Activated CD4-positive, alpha-beta memory T cell treated with anti-CD3 and anti-CD28 coated beads for 36 hours (primary cell): ENCODE measurements at regions of chr4 and their contacts with region 1.

Region 1: GRCh38 chr4:98995183-98996055 is at the start of gene METAP1:
- DNase-seq: peak; percentile 97
- H3K4me3 Mint-ChIP-seq: peak within 1 kb of the TSS; percentile 88
- H3K27ac Mint-ChIP-seq: peak within 1 kb of the TSS; percentile 96
- H3K4me1 Mint-ChIP-seq: peaks cover 37% of the 10 kb centered on the region
- H3K27me3 Mint-ChIP-seq: no peaks in the 10 kb centered on the region
- total RNA-seq, gene METAP1: 60.7 to 61.1 TPM

Region 2: DNA sequence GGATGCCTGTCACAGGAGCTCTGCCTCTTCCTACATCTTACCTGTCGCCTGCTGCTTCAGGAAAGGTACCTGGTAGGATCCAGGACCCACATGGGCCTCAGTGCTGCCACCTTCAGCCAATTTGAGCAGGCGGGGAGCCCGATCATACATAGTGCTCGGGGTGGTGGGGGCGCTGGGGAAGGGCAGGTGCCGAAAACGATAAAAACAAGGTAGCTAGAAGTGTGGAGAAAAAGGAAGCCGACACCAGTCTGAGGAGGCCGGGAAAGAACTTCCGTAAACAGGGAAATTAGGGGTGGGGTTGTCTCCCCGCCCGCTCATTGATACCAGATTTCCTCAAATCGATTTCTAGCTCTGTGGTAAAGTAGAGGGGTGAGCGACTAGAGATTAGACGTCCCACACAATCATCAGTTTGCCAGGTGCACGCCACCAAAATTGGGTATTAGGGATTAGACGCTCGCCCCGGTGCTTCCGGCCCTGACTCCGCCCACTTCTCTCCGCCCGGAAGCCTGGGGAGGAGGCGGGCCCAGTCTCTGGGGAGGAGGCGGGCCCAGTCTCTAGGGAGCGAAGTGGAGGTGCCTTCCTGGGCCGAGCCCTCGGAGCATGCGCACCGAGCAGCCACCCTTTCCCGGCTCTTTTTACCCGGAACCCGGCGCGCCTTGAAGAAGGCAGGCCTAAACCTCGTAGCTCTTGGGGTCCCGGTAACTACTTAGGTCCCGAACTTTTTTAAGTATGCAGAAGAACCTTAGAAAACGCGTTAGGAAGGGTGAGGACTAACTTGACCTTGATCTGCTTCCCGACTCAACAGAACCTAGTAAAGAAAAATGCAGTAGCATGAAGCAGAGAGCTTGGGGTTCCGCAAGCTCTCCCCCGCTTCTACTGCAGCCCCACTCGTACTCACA is 852.2 kb before region 1 on chr4 and contains the start of gene STPG2:
- CTCF ChIA-PET with region 1: interaction called, 4 read pairs
- POLR2A ChIA-PET with region 1: interaction called, 3 read pairs
- intact Hi-C with region 1: loop called (anchors 2 kb)
- DNase-seq: peak; percentile 95
- H3K4me3 Mint-ChIP-seq: peak within 1 kb of the TSS; percentile 95
- H3K27ac Mint-ChIP-seq: peak within 1 kb of the TSS; percentile 98
- H3K4me1 Mint-ChIP-seq: peaks cover 20% of the 10 kb centered on the region
- H3K27me3 Mint-ChIP-seq: no peaks in the 10 kb centered on the region
- total RNA-seq, gene STPG2: not detected

Region 3: DNA sequence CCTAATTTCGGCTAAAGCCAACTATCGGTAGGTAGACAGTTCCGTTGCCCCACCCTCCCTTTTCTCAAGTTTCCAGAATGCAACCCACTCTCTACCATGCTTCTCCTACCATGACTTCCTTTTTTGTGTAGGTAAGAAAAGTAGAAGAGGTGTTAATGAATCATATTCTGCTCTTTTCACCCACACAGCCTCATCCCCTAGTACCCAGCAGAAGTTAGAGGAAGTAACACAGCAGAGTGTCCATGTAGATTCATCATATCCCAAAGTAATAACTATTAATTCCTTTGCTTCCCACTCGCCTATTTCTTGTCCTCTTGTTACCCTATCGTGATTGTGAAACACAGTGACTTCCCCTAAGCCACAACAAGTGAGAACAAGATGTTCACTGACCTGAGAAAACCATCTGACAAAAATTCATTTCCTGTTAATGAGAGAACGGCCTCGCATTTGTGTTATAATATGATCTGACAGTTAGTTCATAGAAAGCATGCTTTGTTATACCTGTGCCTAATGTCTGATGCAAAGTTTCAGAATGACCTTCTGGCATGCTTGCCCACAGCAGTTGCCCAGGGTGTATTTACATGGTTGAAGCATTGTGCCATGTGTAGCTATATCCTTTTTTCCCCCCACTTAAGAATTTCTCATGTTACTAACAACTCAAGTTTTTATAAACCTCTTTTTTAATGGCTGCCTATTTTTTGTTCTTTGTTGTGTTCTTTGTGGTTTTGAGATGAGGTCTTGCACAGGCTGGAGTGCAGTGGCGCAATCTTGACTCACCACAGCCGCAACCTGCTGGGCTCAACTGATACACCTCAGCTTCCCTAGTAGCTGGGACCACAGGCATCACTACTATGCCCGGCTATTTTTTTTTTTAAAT is 548.7 kb before region 1 on chr4:
- CTCF ChIA-PET with region 1: no interaction called
- POLR2A ChIA-PET with region 1: no interaction called
- intact Hi-C with region 1: loop called (anchors 5 kb)
- DNase-seq: peak; percentile 81
- H3K4me3 Mint-ChIP-seq: peak overlapping the region; percentile 48
- H3K27ac Mint-ChIP-seq: peak overlapping the region; percentile 87
- H3K4me1 Mint-ChIP-seq: peaks cover 35% of the 10 kb centered on the region
- H3K27me3 Mint-ChIP-seq: no peaks in the 10 kb centered on the region

Region 4: DNA sequence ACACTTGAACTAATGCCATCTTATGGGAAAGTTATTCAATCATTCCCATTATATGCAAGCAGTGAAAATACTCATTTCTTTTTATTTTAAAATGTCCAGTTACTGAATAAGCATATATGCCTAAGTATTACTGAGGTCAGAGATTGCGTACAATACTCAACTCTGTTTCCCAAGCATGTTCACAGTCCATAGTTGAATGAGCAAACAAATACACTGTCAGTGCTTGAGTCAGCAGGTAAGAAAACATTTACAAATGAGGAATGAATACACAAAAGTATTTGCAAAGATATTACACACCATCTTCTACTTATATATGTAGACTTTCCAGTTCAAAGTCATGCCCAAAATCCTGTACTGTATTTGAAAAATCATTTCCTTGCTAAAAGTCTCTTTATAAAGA is 411.2 kb before region 1 on chr4:
- CTCF ChIA-PET with region 1: no interaction called
- POLR2A ChIA-PET with region 1: no interaction called
- intact Hi-C with region 1: no loop called
- DNase-seq: no peak
- H3K4me3 Mint-ChIP-seq: no peak overlapping the region
- H3K27ac Mint-ChIP-seq: no peak overlapping the region
- H3K4me1 Mint-ChIP-seq: peaks cover 44% of the 10 kb centered on the region
- H3K27me3 Mint-ChIP-seq: no peaks in the 10 kb centered on the region

Region 5: DNA sequence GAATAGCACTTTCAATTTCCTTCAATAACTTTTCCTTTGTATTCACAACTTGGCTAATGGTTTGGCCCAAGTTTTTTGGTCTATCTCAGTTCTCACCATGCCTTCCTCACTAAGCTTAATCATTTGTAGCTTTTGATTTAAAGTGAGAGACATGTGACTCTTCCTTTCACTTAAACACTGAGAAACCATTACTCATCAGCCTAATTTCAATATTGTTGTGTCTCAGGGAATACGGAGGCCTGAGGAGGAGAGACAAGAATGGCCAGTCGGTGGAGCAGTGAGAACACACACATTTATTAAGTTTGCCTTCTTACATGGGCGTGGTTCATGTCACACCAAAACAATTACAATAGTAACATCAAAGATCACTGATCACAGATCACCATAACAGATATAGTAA is 393.7 kb before region 1 on chr4:
- CTCF ChIA-PET with region 1: interaction called, 6 read pairs
- POLR2A ChIA-PET with region 1: no interaction called
- intact Hi-C with region 1: loop called (anchors 1 kb)
- DNase-seq: peak; percentile 54
- H3K4me3 Mint-ChIP-seq: peak overlapping the region; percentile 54
- H3K27ac Mint-ChIP-seq: peak overlapping the region; percentile 82
- H3K4me1 Mint-ChIP-seq: peaks cover 55% of the 10 kb centered on the region
- H3K27me3 Mint-ChIP-seq: no peaks in the 10 kb centered on the region

Region 6: DNA sequence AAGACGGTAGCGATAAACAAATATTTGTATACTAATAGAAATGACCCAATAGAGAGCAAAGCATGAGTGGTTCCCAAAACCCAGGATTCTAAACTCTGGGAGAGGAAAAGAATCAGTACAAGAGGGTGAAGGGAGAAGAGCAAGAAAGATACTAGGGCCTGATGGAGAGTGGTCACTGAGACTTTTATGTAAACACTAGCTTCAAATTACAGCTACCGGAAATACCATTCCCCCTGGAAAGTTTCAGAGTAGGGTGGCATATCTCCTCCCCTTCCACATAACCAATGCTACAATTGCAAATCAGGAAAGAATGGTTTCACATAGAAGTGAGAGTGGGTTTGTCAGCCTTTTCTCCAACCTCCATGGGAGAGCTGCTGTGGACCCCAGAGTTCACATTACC is 143.6 kb before region 1 on chr4:
- CTCF ChIA-PET with region 1: no interaction called
- POLR2A ChIA-PET with region 1: no interaction called
- intact Hi-C with region 1: no loop called
- DNase-seq: no peak
- H3K4me3 Mint-ChIP-seq: no peak overlapping the region
- H3K27ac Mint-ChIP-seq: no peak overlapping the region
- H3K4me1 Mint-ChIP-seq: no peaks in the 10 kb centered on the region
- H3K27me3 Mint-ChIP-seq: peaks cover 5% of the 10 kb centered on the region

Region 7: DNA sequence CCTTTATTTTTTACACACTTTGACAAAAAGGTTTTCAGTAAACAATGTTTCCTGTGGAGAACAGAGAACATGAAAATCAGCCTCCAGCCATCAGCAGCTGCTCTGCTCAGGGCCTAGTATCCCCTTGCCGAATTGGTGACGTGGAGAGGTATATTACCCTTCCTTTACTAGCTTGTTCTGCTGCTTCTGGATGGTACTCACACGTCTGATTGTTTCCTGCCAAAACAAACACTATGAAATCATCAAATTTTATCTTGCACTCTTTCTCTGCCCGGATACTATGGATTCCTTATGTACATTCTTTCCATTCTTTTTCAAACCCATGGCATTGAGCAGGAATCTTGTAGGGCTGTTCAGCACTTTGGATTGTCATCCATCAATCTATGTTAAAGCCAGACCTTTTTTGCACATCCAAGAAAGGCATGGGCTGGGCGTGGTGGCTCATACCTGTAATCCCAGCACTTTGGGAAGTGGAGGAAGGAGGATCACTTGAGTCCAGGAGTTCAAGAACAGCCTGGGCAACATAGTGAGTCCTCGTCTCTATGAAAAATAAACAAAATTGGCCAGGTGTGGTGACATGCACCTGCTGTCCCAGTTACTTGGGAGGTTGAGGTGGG is 18.6 kb before region 1 on chr4:
- CTCF ChIA-PET with region 1: interaction called, 10 read pairs
- POLR2A ChIA-PET with region 1: no interaction called
- intact Hi-C with region 1: no loop called
- DNase-seq: no peak
- H3K4me3 Mint-ChIP-seq: no peak overlapping the region
- H3K27ac Mint-ChIP-seq: no peak overlapping the region
- H3K4me1 Mint-ChIP-seq: no peaks in the 10 kb centered on the region
- H3K27me3 Mint-ChIP-seq: peaks cover 6% of the 10 kb centered on the region

Region 8: GRCh38 chr4:99088481-99089365 is 93.3 kb after region 1 on chr4 and contains the start of gene ADH5:
- CTCF ChIA-PET with region 1: interaction called, 8 read pairs
- POLR2A ChIA-PET with region 1: interaction called, 25 read pairs
- intact Hi-C with region 1: loop called (anchors 1 kb)
- DNase-seq: peak; percentile 95
- H3K4me3 Mint-ChIP-seq: peak within 1 kb of the TSS; percentile 96
- H3K27ac Mint-ChIP-seq: peak within 1 kb of the TSS; percentile 93
- H3K4me1 Mint-ChIP-seq: peaks cover 37% of the 10 kb centered on the region
- H3K27me3 Mint-ChIP-seq: no peaks in the 10 kb centered on the region
- total RNA-seq, gene ADH5: 112 to 119 TPM

Region 9: DNA sequence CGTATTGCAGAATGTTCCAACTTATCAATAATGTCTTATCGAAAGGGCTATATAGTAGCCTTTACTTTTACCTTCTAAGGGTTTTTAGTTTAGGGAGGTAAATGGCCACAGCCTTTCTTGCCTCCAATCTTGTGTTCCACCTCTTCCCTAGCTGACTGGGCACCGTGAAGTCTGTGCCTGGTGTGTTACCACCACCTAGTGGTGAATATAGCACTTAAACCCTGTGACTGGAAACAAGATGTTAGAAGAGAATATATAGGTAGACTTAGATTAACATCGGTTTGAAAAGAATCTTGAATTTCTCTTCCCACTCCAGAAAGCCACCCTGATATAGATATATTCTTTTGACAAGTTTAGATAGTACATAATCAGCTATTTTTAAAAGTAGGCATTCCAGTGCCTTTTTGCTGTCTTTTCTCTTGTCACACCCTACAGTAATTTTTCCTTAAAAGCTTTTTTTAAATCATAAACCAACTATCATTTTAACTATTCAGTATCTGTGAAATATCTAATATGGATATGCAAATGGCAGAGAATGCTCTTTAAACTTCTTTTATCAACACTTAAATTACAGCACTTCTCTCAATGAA is 467.6 kb after region 1 on chr4:
- CTCF ChIA-PET with region 1: interaction called, 5 read pairs
- POLR2A ChIA-PET with region 1: no interaction called
- intact Hi-C with region 1: loop called (anchors 2 kb)
- DNase-seq: peak; percentile 63
- H3K4me3 Mint-ChIP-seq: no peak overlapping the region
- H3K27ac Mint-ChIP-seq: no peak overlapping the region
- H3K4me1 Mint-ChIP-seq: no peaks in the 10 kb centered on the region
- H3K27me3 Mint-ChIP-seq: peaks cover 5% of the 10 kb centered on the region